Activated CD8-positive, alpha-beta memory T cell treated with anti-CD3 and anti-CD28 coated beads, Interleukin-2, amount 10 ng/mL, durations not matched to agents 7 days and 5 days (primary cell): ENCODE measurements at regions of chr16 and their contacts with region 1.

Region 1: DNA sequence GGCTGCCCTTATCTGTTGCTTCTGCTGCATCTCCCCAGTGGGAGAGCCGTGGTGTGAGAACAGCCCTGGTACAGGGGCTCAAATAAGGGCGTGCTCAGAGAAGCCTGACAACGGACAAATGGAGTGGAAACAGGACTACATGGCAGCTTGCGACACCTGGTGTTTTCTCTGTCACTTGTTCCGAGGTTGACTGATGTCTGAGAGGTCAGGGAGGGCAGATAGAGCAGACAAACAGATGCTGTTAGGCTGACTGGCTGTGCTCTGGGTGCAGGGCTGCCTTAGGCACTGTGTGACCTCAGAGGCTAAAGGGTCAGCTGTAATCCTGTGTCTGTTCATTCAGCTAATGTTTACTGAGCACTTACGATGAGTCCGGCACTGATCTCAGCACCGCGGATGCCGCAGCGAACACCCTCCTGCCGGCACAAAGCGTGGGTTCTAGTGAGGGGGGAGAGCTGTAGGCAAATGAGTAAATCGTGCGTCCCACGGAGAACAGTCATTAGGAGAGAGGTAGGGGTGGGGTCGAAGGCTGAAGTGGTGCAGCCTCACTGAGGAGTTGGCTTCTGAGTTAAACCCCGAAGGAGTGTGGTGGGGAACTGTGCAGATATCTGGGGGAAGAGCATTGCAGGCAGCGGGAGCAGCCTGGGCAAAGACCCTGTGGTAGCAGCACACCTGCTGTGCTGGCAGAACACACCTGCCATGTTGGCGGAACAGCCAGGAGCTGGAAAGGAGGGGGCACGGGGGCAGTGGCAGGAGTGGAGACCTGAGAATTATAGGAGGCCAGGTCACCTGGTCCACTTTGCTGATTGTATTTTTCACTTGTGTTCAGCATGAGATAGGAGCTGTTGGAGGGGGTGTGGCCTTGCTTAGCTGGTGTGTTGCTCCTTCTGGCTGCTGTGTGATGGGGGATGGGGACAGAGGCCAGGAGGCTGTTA is 35.0 kb downstream of the GPT2 start:
- DNase-seq: no peak
- ATAC-seq: no peak
- H3K4me3 Mint-ChIP-seq: no peak overlapping the region
- H3K27ac Mint-ChIP-seq: no peak overlapping the region
- H3K4me1 Mint-ChIP-seq: no peaks in the 10 kb centered on the region
- H3K27me3 Mint-ChIP-seq: no peaks in the 10 kb centered on the region

Region 2: DNA sequence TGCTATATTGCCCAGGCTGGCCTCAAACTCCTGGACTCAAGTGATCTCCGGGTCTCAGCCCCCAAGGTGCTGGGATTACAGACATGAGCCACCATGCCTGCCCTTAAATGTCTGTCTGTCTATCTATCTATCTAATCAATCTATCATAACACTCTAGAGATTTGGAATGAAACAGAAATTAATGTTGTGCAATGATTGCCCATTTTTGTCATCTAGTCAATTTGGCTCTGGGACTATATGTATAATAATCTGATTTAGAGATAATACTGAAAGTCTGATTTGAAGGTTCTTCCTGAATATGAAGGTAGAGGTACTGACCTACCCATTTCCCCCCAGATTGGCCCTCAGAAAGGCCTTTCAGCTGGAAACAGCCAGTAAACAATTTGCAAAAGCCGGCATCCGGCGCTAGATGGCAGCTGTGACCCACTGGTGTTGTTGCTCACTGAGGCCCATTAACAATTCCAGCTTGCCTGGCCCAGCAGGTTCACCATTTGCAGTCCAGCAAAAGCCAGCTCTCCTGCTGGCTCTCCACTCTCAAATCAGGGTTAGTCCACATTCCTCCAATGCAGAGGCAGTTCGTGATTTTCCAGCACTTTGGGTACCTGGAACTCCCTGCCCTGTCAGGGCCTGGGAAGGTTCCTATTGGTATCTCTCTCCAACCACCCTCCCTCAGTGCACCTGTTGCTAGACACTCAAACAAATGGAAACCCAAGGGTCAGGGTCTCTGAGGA is 65.2 kb before region 1 on chr16:
- CTCF ChIA-PET with region 1: interaction called, 17 read pairs
- DNase-seq: peak; percentile 79
- ATAC-seq: peak; percentile 76
- H3K4me3 Mint-ChIP-seq: no peak overlapping the region
- H3K27ac Mint-ChIP-seq: no peak overlapping the region
- H3K4me1 Mint-ChIP-seq: no peaks in the 10 kb centered on the region
- H3K27me3 Mint-ChIP-seq: peaks cover 5% of the 10 kb centered on the region